HCT116 (cell line): ENCODE measurements at regions of chr10 and their contacts with region 1.

Region 1: DNA sequence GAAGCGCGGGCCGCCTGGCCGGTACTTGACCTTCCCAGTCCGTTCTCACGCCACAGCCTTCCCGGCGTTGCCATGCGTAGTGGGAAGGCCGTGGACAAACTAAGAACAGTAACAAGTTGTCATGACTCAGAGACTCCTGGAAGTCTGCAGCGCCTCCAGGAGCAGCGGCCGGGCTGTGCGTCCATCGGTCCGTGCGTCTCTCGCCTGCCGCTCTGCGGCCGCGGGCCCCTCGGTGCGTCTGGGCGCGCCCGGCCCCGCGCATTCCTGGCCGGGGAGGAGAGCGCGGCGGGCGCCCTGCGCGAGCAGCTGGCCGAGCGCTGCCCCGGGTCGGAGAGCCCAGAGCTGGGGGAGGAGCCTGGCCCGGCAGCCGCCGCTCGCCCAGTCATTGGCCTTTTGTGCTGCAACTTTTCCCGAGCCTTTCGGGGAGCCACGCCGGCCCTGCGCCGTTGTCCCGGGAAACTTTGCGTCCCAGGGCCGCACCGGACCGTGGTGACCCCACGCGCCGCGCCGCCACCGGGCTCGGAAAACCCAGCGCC is 123.7 kb downstream of the TACC2 start:
- DNase-seq: peak; percentile 72
- ATAC-seq: peak; percentile 88
- H3K4me3 ChIP-seq: peak overlapping the region; percentile 74 to 85
- H3K27ac ChIP-seq: peak overlapping the region; percentile 86
- H3K4me1 ChIP-seq: peaks cover 13 to 30% of the 10 kb centered on the region in 2 experiments
- H3K27me3 ChIP-seq: no peaks in the 10 kb centered on the region
- CTCF ChIP-seq: peak; percentile 41 to 93 (median 46); a peak in 4 of 6 replicates
- POLR2A ChIP-seq: peak; percentile 56
- RAD21 ChIP-seq: peak; percentile 85

Region 2: DNA sequence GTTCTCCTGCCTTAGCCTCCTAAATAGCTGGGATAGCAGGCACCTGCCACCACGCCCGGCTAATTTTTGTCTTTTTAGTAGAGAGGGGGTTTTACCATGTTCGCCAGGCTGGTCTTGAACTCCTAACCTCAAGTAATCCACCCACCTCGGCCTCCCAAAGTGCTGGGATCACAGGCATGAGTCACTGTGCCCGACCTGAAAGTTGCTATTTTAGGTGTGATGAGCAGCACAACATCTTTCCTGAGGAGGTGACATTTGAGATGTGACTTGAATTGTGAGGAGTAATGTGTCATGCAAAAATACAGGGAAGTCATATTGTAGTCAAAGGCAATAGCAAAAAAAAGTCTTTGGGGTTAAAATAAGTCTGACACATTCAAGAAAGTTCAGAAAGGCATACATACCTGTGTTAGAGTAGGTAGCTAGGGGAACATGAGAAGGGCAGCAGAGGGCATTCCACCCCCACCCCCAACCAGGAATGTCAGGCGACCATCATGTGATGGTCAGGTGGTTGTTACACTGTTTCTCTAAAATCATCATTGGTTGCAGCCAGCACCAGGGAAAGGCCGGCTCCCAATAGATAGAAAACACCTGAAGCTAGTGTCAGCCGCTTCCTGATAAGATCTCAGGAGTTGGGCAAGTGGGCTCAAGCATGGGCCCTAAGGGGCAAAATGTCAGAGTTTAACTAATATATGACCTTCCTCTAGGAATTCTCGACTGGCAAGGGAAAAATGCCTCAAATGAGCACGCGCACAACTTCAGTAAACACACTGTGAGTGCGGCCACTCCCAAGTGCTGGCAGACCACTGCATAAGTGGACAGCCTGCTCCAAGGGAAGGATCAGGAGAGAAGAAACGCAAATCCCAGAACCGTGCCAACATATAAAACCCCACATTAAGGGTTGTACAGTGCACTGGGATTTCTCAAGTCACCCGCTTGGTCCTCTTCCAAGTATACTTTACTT is 124.1 kb before region 1 on chr10 and contains the start of gene TACC2:
- CTCF ChIA-PET with region 1: no interaction called
- POLR2A ChIA-PET with region 1: no interaction called
- RAD21 ChIA-PET with region 1: no interaction called
- intact Hi-C with region 1: loop called (anchors 5 kb)
- DNase-seq: peak; percentile 48
- ATAC-seq: peak; percentile 50
- H3K4me3 ChIP-seq: peak within 1 kb of the TSS in 1 of 2 experiments; percentile 8; a peak in 1 of 4 replicates
- H3K27ac ChIP-seq: peak within 1 kb of the TSS; percentile 45; the same call in 1 of the 2 replicates
- H3K4me1 ChIP-seq: peaks cover 18 to 25% of the 10 kb centered on the region in 2 experiments
- H3K27me3 ChIP-seq: no peaks in the 10 kb centered on the region
- CTCF ChIP-seq: no peak
- POLR2A ChIP-seq: no peak
- RAD21 ChIP-seq: peak; percentile 11; the same call in 1 of the 2 replicates
- total RNA-seq, gene TACC2: 38.6 TPM

Region 3: GRCh38 chr10:122051251-122051996 is 61.3 kb before region 1 on chr10:
- CTCF ChIA-PET with region 1: interaction called, 5 read pairs
- POLR2A ChIA-PET with region 1: interaction called, 4 read pairs
- RAD21 ChIA-PET with region 1: interaction called in 1 of 2 experiments, 3 read pairs
- intact Hi-C with region 1: loop called (anchors 1 kb)
- DNase-seq: peak; percentile 79
- ATAC-seq: peak; percentile 73
- H3K4me3 ChIP-seq: no peak overlapping the region
- H3K27ac ChIP-seq: no peak overlapping the region; the same call in 1 of the 2 replicates
- H3K4me1 ChIP-seq: peaks cover 9 to 13% of the 10 kb centered on the region in 2 experiments
- H3K27me3 ChIP-seq: no peaks in the 10 kb centered on the region
- CTCF ChIP-seq: peak; percentile 74 to 98 (median 96)
- POLR2A ChIP-seq: no peak
- RAD21 ChIP-seq: peak; percentile 76

Region 4: GRCh38 chr10:122062831-122063674 is 49.6 kb before region 1 on chr10:
- CTCF ChIA-PET with region 1: interaction called, 6 read pairs
- POLR2A ChIA-PET with region 1: no interaction called
- RAD21 ChIA-PET with region 1: no interaction called
- intact Hi-C with region 1: loop called (anchors 2 kb)
- DNase-seq: peak; percentile 91
- ATAC-seq: peak; percentile 98
- H3K4me3 ChIP-seq: peak overlapping the region; percentile 0 to 28; a peak in 2 of 4 replicates
- H3K27ac ChIP-seq: peak overlapping the region; percentile 74
- H3K4me1 ChIP-seq: peaks cover 31 to 35% of the 10 kb centered on the region in 2 experiments
- H3K27me3 ChIP-seq: no peaks in the 10 kb centered on the region
- CTCF ChIP-seq: no peak
- POLR2A ChIP-seq: no peak
- RAD21 ChIP-seq: peak; percentile 42

Region 5: GRCh38 chr10:122142641-122143237 is 30.0 kb after region 1 on chr10:
- CTCF ChIA-PET with region 1: interaction called, 10 read pairs
- POLR2A ChIA-PET with region 1: interaction called, 3 read pairs
- RAD21 ChIA-PET with region 1: interaction called in 1 of 2 experiments, 3 read pairs
- intact Hi-C with region 1: no loop called
- DNase-seq: no peak
- ATAC-seq: peak; percentile 52
- H3K4me3 ChIP-seq: no peak overlapping the region
- H3K27ac ChIP-seq: no peak overlapping the region; the same call in 1 of the 2 replicates
- H3K4me1 ChIP-seq: peaks cover 31 to 45% of the 10 kb centered on the region in 2 experiments
- H3K27me3 ChIP-seq: no peaks in the 10 kb centered on the region
- CTCF ChIP-seq: peak; percentile 70 to 100 (median 99)
- POLR2A ChIP-seq: no peak
- RAD21 ChIP-seq: peak; percentile 92